CD4-positive, alpha-beta T cell (primary cell): ENCODE measurements at regions of chr11 and their contacts with region 1.

Region 1: GRCh38 chr11:128157423-128158298 is 429.7 kb downstream of the ETS1 start:
- DNase-seq: peak in 13 of 14 experiments; percentile 9 to 84 (median 41)
- ATAC-seq: peak; percentile 94
- H3K4me3 ChIP-seq: peak overlapping the region; percentile 37
- H3K4me3 Mint-ChIP-seq: peak overlapping the region; percentile 87
- H3K27ac ChIP-seq: no peak overlapping the region
- H3K27ac Mint-ChIP-seq: peak overlapping the region; percentile 24
- H3K4me1 ChIP-seq: no peaks in the 10 kb centered on the region
- H3K4me1 Mint-ChIP-seq: peaks cover 8% of the 10 kb centered on the region
- H3K27me3 ChIP-seq: no peaks in the 10 kb centered on the region
- H3K27me3 Mint-ChIP-seq: no peaks in the 10 kb centered on the region
- CTCF ChIP-seq: peak; percentile 100

Region 2: DNA sequence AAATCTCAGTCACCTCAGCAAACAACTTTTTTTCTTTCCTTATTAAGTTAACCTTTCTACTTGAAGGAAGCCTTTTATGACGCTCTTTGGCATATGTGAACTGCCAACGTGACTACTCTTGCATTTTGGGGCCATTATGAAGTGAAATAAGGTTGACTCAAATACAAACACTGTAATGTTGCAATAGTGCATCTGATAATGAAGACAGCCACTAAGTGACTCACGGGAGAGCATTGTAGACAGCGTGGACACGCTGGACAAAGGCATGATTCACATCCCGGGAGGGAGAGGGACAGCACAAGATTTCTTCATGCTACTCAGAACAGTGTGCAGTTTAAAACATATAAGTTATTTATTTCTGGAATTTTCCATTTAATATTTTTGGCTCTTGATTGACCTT is 131.1 kb before region 1 on chr11:
- CTCF ChIA-PET with region 1: interaction called, 9 read pairs
- POLR2A ChIA-PET with region 1: interaction called, 5 read pairs
- intact Hi-C with region 1: loop called (anchors 1 kb)
- DNase-seq: peak in 1 of 14 experiments; percentile 41
- ATAC-seq: no peak
- H3K4me3 ChIP-seq: no peak overlapping the region
- H3K4me3 Mint-ChIP-seq: no peak overlapping the region
- H3K27ac ChIP-seq: no peak overlapping the region
- H3K27ac Mint-ChIP-seq: no peak overlapping the region
- H3K4me1 ChIP-seq: peaks cover under 1% of the 10 kb centered on the region
- H3K4me1 Mint-ChIP-seq: peaks cover 4% of the 10 kb centered on the region
- H3K27me3 ChIP-seq: peaks cover 0 to 3% of the 10 kb centered on the region in 2 experiments
- H3K27me3 Mint-ChIP-seq: peaks cover 3% of the 10 kb centered on the region
- CTCF ChIP-seq: no peak

Region 3: GRCh38 chr11:128294001-128294670 is 136.5 kb after region 1 on chr11:
- CTCF ChIA-PET with region 1: no interaction called
- POLR2A ChIA-PET with region 1: no interaction called
- intact Hi-C with region 1: no loop called
- DNase-seq: no peak
- ATAC-seq: no peak
- H3K4me3 ChIP-seq: no peak overlapping the region
- H3K4me3 Mint-ChIP-seq: peak overlapping the region; percentile 21
- H3K27ac ChIP-seq: peak overlapping the region in 1 of 2 donors; percentile 11
- H3K27ac Mint-ChIP-seq: peak overlapping the region; percentile 100
- H3K4me1 ChIP-seq: peaks cover 91% of the 10 kb centered on the region
- H3K4me1 Mint-ChIP-seq: peaks cover 98% of the 10 kb centered on the region
- H3K27me3 ChIP-seq: no peaks in the 10 kb centered on the region
- H3K27me3 Mint-ChIP-seq: no peaks in the 10 kb centered on the region
- CTCF ChIP-seq: no peak

Region 4: DNA sequence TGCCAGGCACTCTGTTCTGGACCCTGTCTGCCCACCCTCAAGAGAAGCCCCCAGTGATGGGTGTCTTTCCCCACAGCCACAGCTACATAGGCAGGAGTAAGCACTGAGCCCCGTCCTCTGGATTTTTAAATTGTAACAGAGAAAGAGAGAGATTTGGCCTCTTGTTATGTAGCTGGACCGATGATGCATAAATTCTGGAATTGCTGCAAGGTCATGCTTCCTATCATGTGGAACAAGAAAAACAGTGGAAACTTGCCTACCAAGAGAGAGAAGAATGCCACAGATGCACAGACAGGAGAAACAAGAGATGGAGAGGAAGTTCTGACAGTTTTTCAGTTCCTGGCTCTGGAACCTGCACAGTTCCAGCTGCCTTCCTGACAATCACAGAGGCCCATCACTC is 279.5 kb after region 1 on chr11:
- CTCF ChIA-PET with region 1: no interaction called
- POLR2A ChIA-PET with region 1: no interaction called
- intact Hi-C with region 1: no loop called
- DNase-seq: no peak
- ATAC-seq: no peak
- H3K4me3 ChIP-seq: no peak overlapping the region
- H3K4me3 Mint-ChIP-seq: no peak overlapping the region
- H3K27ac ChIP-seq: no peak overlapping the region
- H3K27ac Mint-ChIP-seq: no peak overlapping the region
- H3K4me1 ChIP-seq: no peaks in the 10 kb centered on the region
- H3K4me1 Mint-ChIP-seq: peaks cover 31% of the 10 kb centered on the region
- H3K27me3 ChIP-seq: no peaks in the 10 kb centered on the region
- H3K27me3 Mint-ChIP-seq: no peaks in the 10 kb centered on the region
- CTCF ChIP-seq: no peak

Region 5: DNA sequence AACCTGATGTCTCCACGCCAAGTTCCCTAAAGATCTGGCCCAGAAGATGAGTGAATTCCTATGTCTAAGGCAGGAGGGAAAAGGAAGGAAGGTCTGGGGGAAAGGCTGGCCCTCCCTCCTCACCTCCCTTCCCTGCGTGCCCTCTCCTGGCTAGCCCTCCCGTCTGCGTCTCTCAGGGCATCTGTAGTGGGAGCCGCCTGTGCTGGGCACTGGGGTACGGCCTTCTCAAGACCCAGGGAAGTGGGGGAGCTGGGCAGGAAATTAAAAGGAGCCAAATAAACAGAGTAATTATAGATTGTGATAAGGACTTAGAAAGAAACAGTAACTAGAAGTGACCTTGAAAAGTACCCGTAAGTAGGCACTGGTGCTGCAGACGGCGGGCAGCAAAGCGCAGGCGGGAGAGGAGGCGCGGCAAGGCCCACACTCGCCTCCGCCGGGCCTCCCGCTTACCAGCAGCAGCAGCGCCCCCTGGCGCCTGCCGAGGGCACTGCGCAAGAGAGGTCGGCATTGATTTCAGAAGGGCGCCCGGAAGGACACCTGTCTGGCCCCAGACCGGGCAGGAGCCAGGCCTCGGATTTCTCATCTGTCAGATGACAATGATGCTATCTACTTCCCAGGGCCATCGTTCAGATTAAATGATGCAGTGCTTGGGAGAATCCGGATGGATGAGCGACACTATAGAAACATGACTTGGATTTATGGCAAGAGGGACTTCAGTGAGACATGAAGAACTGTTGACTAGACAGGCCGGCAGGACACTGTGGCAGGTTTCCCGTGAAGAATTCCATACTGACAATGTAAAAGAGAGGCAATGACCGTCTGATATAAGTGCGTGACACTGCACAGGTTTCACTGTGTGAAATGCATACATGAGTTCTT is 702.1 kb after region 1 on chr11:
- CTCF ChIA-PET with region 1: interaction called, 3 read pairs
- POLR2A ChIA-PET with region 1: no interaction called
- intact Hi-C with region 1: loop called in 1 of 2 experiments (anchors 5 kb)
- DNase-seq: peak; percentile 57 to 86 (median 72)
- ATAC-seq: peak; percentile 98
- H3K4me3 ChIP-seq: no peak overlapping the region
- H3K4me3 Mint-ChIP-seq: no peak overlapping the region
- H3K27ac ChIP-seq: no peak overlapping the region
- H3K27ac Mint-ChIP-seq: no peak overlapping the region
- H3K4me1 ChIP-seq: peaks cover 9% of the 10 kb centered on the region
- H3K4me1 Mint-ChIP-seq: peaks cover 9% of the 10 kb centered on the region
- H3K27me3 ChIP-seq: no peaks in the 10 kb centered on the region
- H3K27me3 Mint-ChIP-seq: no peaks in the 10 kb centered on the region
- CTCF ChIP-seq: peak; percentile 97